ENCODE measurements at regions of chr10 and their contacts with region 1.

Region 1: DNA sequence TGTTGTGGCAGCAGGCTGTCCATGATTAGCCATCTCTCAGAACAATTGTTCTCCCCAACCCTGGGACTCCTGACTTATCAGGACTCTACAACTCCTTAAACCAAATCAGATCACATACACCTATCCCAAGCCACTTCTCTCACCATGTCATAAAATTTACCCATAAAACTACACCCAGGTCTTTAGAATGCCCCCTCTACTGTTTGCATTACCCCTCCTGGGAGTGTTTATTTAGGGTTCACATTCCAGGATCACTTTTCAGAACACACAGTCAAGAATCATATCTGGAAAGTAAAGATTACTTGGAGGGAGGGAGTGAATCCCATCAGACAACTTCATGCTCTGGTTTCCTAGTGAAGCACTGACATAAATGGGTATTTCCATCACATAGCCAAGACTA is 7.1 kb downstream of the ASAH2 start:
- DNase-seq: no peak
- H3K4me3 ChIP-seq: no peak overlapping the region
- H3K4me3 Mint-ChIP-seq: peak overlapping the region; percentile 29
- H3K27ac Mint-ChIP-seq: no peak overlapping the region
- H3K4me1 ChIP-seq: peaks cover 24% of the 10 kb centered on the region
- H3K4me1 Mint-ChIP-seq: peaks cover 27% of the 10 kb centered on the region
- H3K27me3 ChIP-seq: no peaks in the 10 kb centered on the region
- H3K27me3 Mint-ChIP-seq: peaks cover 3% of the 10 kb centered on the region
- CTCF ChIP-seq: no peak

Region 2: GRCh38 chr10:50231515-50232260 is 12.5 kb before region 1 on chr10:
- CTCF ChIA-PET with region 1: interaction called, 5 read pairs
- POLR2A ChIA-PET with region 1: no interaction called
- intact Hi-C with region 1: loop called (anchors 1 kb)
- DNase-seq: no peak
- H3K4me3 ChIP-seq: no peak overlapping the region
- H3K4me3 Mint-ChIP-seq: no peak overlapping the region
- H3K27ac Mint-ChIP-seq: no peak overlapping the region
- H3K4me1 ChIP-seq: peaks cover 24% of the 10 kb centered on the region
- H3K4me1 Mint-ChIP-seq: peaks cover 27% of the 10 kb centered on the region
- H3K27me3 ChIP-seq: no peaks in the 10 kb centered on the region
- H3K27me3 Mint-ChIP-seq: no peaks in the 10 kb centered on the region
- CTCF ChIP-seq: no peak

Region 3: DNA sequence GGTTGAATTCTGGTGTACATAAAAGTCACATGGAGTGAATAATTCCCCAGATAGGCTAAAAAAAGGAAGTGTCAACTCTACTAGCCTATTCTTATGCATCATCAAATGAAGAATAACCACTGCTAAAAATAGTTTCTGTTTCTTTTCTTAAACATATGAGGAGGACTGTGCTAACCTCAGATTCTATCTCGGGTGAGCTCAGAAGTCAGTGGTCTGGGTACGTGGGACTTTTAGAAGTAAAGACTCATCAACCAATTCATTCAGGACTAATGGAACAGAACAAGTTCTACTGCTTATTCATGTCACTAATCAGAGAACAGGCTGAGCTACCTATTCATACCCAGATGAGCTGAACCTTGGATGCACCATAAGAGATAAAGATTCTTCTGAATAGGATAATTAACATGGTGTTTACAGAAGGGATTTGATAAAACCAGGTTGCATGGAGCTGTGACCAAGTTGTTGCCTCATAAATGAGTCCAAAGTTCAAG is 16.6 kb after region 1 on chr10:
- CTCF ChIA-PET with region 1: no interaction called
- POLR2A ChIA-PET with region 1: no interaction called
- intact Hi-C with region 1: loop called (anchors 2 kb)
- DNase-seq: peak; percentile 50 to 57
- H3K4me3 ChIP-seq: no peak overlapping the region
- H3K4me3 Mint-ChIP-seq: no peak overlapping the region
- H3K27ac Mint-ChIP-seq: no peak overlapping the region
- H3K4me1 ChIP-seq: peaks cover 18% of the 10 kb centered on the region
- H3K4me1 Mint-ChIP-seq: no peaks in the 10 kb centered on the region
- H3K27me3 ChIP-seq: no peaks in the 10 kb centered on the region
- H3K27me3 Mint-ChIP-seq: peaks cover 6% of the 10 kb centered on the region
- CTCF ChIP-seq: no peak

Region 4: GRCh38 chr10:51074238-51075028 is 830.2 kb after region 1 on chr10 and contains the start of gene PRKG1:
- CTCF ChIA-PET with region 1: no interaction called
- POLR2A ChIA-PET with region 1: no interaction called
- intact Hi-C with region 1: no loop called
- DNase-seq: peak; percentile 76 to 78
- H3K4me3 ChIP-seq: peak within 1 kb of the TSS; percentile 43
- H3K4me3 Mint-ChIP-seq: peak within 1 kb of the TSS; percentile 84
- H3K27ac Mint-ChIP-seq: no peak within 1 kb of the TSS
- H3K4me1 ChIP-seq: peaks cover 5% of the 10 kb centered on the region
- H3K4me1 Mint-ChIP-seq: peaks cover 7% of the 10 kb centered on the region
- H3K27me3 ChIP-seq: peaks cover 8% of the 10 kb centered on the region
- H3K27me3 Mint-ChIP-seq: peaks cover 33% of the 10 kb centered on the region
- CTCF ChIP-seq: no peak
- total RNA-seq, gene PRKG1: 0.09 and 0.12 TPM in 2 replicates

Measured in Caco-2 (cell line).